Activated naive CD4-positive, alpha-beta T cell treated with anti-CD3 and anti-CD28 coated beads for 36 hours (primary cell): ENCODE measurements at regions of chr13 and their contacts with region 1.

Region 1: GRCh38 chr13:94345374-94346195 is 133.9 kb downstream of the DCT start:
- DNase-seq: no peak
- H3K4me3 Mint-ChIP-seq: no peak overlapping the region
- H3K27ac Mint-ChIP-seq: no peak overlapping the region
- H3K4me1 Mint-ChIP-seq: peaks cover 24% of the 10 kb centered on the region
- H3K27me3 Mint-ChIP-seq: peaks cover 4% of the 10 kb centered on the region

Region 2: DNA sequence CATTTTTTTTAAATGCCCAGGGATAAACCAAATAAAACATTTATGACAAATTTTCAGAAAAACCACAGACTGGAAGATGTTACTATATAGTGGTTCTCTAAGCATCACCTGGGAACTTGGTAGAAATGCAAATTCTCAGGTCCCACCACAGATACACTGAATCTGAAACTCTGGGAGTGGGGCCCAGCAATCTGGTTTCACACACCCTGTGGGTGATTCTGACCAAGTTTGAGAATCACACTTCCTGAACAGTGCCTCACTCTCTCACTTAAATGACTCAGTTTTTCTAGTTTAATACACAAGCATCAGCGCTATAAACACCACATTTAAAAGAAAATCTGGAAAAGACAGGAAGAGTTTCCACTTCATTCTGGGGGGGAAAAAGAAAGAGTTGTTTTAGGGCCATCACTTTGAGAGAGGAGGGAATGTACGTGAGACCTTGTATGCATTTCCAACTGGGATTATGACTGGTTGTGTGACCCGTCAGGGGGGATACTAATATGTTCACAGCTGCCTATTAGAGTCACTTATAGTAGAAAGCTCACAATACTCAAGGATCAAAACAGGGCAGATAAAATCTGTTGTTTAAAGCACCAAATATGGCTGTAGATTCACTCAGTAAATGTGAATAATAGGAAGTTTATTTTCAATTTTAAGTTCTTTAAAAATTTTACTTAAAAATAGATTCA is 551.2 kb before region 1 on chr13:
- CTCF ChIA-PET with region 1: no interaction called
- intact Hi-C with region 1: loop called (anchors 1 kb)
- DNase-seq: peak; percentile 75
- H3K4me3 Mint-ChIP-seq: no peak overlapping the region
- H3K27ac Mint-ChIP-seq: no peak overlapping the region
- H3K4me1 Mint-ChIP-seq: peaks cover 8% of the 10 kb centered on the region
- H3K27me3 Mint-ChIP-seq: peaks cover 34% of the 10 kb centered on the region

Region 3: DNA sequence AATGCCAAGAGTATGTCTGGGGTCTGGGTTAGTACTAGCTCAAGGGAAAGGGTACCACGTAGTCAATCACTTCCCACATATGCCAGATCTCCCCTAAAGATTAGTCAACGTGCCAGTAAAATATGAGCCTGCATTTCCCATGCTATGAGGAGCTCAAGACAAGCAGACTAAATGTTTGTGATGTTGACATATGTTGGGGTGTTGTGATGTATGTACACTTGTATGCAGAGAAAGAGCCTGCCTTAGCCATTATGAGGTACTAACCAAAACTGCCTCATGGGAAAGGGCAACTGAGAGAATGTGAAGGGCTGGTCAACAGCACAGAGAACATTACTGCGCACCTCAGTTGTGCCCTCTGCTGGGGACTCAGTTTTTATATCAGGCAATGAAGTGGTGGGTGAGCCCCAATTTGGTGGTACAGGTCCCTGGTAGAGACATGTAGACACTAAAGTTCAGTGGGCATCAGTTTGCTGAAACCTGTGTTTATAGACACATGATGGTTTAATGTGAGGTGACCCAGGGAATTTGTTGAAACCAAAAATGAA is 153.1 kb before region 1 on chr13:
- CTCF ChIA-PET with region 1: no interaction called
- intact Hi-C with region 1: loop called (anchors 5 kb)
- DNase-seq: peak; percentile 32
- H3K4me3 Mint-ChIP-seq: no peak overlapping the region
- H3K27ac Mint-ChIP-seq: no peak overlapping the region
- H3K4me1 Mint-ChIP-seq: no peaks in the 10 kb centered on the region
- H3K27me3 Mint-ChIP-seq: no peaks in the 10 kb centered on the region

Region 4: GRCh38 chr13:94239135-94239534 is 106.5 kb before region 1 on chr13:
- CTCF ChIA-PET with region 1: no interaction called
- intact Hi-C with region 1: loop called (anchors 5 kb)
- DNase-seq: peak; percentile 33
- H3K4me3 Mint-ChIP-seq: no peak overlapping the region
- H3K27ac Mint-ChIP-seq: no peak overlapping the region
- H3K4me1 Mint-ChIP-seq: peaks cover 44% of the 10 kb centered on the region
- H3K27me3 Mint-ChIP-seq: no peaks in the 10 kb centered on the region

Region 5: GRCh38 chr13:94298346-94298745 is 47.2 kb before region 1 on chr13:
- CTCF ChIA-PET with region 1: interaction called, 4 read pairs
- intact Hi-C with region 1: loop called (anchors 1 kb)
- DNase-seq: no peak
- H3K4me3 Mint-ChIP-seq: no peak overlapping the region
- H3K27ac Mint-ChIP-seq: no peak overlapping the region
- H3K4me1 Mint-ChIP-seq: peaks cover 2% of the 10 kb centered on the region
- H3K27me3 Mint-ChIP-seq: no peaks in the 10 kb centered on the region

Region 6: DNA sequence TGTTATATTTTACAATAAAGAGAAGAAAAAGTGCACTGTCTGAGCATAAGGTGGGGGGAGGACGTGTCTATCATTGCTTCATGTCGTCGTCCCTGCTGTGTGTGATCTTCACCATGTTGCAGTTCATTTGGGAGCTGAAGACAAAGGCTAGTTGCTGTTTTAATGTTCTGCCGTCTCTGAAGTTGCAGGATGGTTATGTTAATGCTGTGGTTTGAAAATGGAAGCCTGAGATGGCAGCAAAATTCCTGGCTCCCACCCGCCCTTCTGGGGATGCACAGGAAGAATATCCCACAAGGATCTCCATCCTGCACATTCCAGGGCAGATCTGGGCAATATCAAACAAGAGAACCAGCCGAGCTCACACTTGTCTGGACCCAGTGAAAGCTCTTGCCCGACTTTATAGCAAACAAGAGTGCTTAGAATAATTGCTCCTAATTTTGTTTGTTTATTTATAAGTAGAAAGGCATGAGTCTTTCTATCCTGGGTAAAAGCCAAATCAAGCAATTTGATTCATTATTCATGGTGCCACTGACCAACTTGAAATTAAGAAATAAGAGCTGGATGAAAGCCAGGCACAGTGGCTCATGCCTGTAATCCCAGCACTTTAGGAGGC is 1065.9 kb after region 1 on chr13:
- CTCF ChIA-PET with region 1: no interaction called
- intact Hi-C with region 1: no loop called
- DNase-seq: no peak
- H3K4me3 Mint-ChIP-seq: no peak overlapping the region
- H3K27ac Mint-ChIP-seq: no peak overlapping the region
- H3K4me1 Mint-ChIP-seq: no peaks in the 10 kb centered on the region
- H3K27me3 Mint-ChIP-seq: no peaks in the 10 kb centered on the region

Region 7: DNA sequence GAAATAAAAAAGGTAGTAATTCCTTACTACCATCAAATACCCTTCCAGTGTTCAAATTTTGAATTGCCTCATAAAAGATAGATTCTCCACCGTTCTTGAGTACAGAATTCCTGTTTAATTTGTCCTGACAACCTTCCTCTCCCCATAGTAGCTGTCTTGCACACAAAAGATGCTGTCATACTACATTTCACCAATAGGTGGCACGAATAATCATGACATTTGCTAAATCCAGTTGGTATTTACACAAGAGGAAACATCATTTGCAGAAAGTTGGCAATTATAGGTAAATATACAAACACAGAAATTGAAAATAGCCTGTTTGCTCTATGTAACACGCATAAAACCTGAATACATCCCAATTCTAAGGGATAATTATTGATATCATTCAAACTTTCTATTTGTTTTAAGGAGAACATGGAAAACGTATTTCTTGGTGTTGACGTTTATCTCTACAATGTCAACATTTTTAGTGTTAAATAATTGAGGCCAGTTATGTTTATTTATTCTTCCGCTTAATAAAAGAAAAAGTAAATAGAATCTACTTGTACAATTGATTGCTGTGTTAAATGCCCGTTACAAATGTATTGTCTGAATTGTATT is 1148.6 kb after region 1 on chr13:
- CTCF ChIA-PET with region 1: no interaction called
- intact Hi-C with region 1: no loop called
- DNase-seq: no peak
- H3K4me3 Mint-ChIP-seq: no peak overlapping the region
- H3K27ac Mint-ChIP-seq: no peak overlapping the region
- H3K4me1 Mint-ChIP-seq: no peaks in the 10 kb centered on the region
- H3K27me3 Mint-ChIP-seq: peaks cover 12% of the 10 kb centered on the region